Mammary epithelial cell (primary cell): ENCODE measurements at regions of chrX and their contacts with region 1.

Region 1: GRCh38 chrX:68828740-68829552 is at the start of gene EFNB1:
- DNase-seq: peak; percentile 90
- H3K4me3 ChIP-seq: peak within 1 kb of the TSS; percentile 66 to 74 (median 74)
- H3K27ac ChIP-seq: peak within 1 kb of the TSS; percentile 81
- H3K4me1 ChIP-seq: peaks cover 5% of the 10 kb centered on the region
- H3K27me3 ChIP-seq: no peaks in the 10 kb centered on the region
- CTCF ChIP-seq: no peak
- total RNA-seq, gene EFNB1: 143 to 167 TPM

Region 2: DNA sequence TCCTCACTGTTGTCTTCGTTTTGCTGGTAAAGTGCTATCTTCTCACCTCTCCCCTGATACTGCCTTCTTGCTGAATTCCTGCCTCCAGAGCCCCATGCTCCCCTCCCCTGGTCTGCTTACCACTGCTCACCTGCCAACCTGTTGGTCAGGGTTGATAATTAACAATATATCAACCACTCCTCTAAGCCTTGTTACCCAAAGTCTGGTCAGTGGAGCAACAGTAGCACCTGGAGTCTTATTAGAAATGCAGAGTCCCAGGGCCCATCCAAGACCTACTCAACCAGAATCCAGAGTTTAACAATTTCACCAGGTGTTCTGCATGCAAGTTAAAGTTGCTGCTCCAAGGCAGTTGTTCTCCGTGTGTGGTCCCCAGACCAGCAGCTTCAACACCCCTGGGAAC is 54.9 kb after region 1 on chrX:
- CTCF ChIA-PET with region 1: no interaction called
- dilution Hi-C with region 1: no loop called
- in situ Hi-C with region 1: no loop called
- intact Hi-C with region 1: no loop called
- DNase-seq: no peak
- H3K4me3 ChIP-seq: no peak overlapping the region
- H3K27ac ChIP-seq: no peak overlapping the region
- H3K4me1 ChIP-seq: peaks cover 9% of the 10 kb centered on the region
- H3K27me3 ChIP-seq: no peaks in the 10 kb centered on the region
- CTCF ChIP-seq: no peak

Region 3: DNA sequence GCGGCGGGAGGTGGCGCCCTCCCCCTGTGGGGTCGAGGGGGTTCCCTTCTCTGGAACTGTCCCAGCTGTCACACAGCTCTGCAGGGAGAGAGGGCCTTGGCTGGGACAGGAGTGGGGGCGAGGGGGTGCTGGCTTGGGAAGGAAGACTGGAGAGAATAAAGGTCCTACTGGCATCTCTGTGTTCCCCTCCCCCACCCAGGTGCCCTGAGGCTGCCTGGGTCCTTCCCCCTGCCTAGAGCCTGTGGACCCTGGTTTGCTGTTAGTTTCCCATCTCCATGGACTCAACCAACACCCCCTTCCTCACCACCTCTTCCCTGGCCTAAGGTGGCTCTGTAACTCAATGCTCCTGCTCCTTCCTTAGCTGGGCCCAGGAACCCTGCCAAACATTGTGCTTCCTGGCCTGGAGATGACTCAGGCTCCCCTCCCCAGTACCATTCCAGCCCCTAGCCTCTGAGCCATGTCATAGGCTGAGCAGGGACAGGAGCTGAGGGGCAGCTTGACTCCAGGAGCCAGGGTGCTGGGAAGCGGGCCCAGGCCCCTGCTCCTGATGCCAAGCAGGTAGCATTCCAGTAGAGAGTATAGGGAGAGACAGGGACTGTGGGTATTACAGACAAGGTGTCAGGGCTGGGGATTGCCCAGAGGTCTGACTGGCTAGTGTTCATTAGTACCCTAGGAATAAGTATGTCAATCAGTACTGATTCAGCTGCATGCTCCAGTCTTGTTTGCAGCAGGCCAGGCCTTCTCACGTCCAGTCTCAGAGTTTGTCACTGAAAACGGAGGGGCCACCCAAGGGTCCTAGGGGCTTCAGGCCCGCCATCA is 100.6 kb after region 1 on chrX:
- CTCF ChIA-PET with region 1: no interaction called
- dilution Hi-C with region 1: no loop called
- in situ Hi-C with region 1: loop called in 1 of 2 experiments (anchors 10 kb)
- intact Hi-C with region 1: loop called (anchors 2 kb)
- DNase-seq: peak; percentile 66
- H3K4me3 ChIP-seq: no peak overlapping the region
- H3K27ac ChIP-seq: no peak overlapping the region
- H3K4me1 ChIP-seq: peaks cover 16% of the 10 kb centered on the region
- H3K27me3 ChIP-seq: no peaks in the 10 kb centered on the region
- CTCF ChIP-seq: no peak

Region 4: DNA sequence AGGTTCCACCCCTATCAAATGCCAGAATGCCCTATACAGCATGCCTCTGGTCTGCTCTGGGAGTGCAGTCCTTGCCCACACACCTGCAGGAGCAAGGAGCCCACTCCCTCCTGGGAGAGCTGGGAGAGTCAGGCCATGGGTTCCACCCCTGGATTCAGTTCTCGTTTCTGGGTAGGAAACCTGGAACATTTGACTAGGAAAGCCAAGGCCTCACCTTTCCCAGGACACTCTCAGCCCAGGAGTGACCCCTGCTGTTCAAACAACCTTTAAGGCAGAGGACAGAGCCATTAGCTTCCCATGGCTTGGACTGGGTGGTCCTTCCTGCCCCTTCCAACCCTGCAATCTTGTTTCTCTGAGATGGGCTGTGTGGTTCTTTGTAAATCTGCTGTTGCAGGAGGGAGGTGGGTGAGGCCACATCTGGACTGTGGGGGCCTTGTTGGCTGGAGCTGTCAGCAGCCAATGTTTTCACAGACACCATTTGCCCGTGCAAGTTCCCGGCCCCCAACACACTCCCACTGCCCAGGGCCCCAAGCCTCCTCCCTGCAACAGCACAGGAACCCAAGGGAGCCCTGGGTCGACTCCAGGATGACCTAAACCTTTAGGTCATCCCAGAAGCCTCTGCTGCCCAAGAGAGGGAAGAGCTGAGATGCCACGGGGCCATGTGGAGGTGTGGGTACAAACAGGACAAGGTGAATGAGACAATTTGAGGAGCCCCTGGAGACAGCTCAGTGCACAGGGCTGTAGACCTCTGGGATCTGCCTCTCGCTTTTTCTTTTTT is 231.9 kb after region 1 on chrX:
- CTCF ChIA-PET with region 1: interaction called, 7 read pairs
- dilution Hi-C with region 1: no loop called
- in situ Hi-C with region 1: no loop called
- intact Hi-C with region 1: loop called (anchors 1 kb)
- DNase-seq: peak; percentile 36
- H3K4me3 ChIP-seq: no peak overlapping the region
- H3K27ac ChIP-seq: no peak overlapping the region
- H3K4me1 ChIP-seq: no peaks in the 10 kb centered on the region
- H3K27me3 ChIP-seq: no peaks in the 10 kb centered on the region
- CTCF ChIP-seq: peak in 1 of 2 donors; percentile 48

Region 5: GRCh38 chrX:69216911-69217310 is 388.0 kb after region 1 on chrX:
- CTCF ChIA-PET with region 1: interaction called, 12 read pairs
- dilution Hi-C with region 1: no loop called
- in situ Hi-C with region 1: loop called in 1 of 2 experiments (anchors 5 kb)
- intact Hi-C with region 1: loop called (anchors 1 kb)
- DNase-seq: no peak
- H3K4me3 ChIP-seq: no peak overlapping the region
- H3K27ac ChIP-seq: no peak overlapping the region
- H3K4me1 ChIP-seq: no peaks in the 10 kb centered on the region
- H3K27me3 ChIP-seq: no peaks in the 10 kb centered on the region
- CTCF ChIP-seq: no peak

Region 6: DNA sequence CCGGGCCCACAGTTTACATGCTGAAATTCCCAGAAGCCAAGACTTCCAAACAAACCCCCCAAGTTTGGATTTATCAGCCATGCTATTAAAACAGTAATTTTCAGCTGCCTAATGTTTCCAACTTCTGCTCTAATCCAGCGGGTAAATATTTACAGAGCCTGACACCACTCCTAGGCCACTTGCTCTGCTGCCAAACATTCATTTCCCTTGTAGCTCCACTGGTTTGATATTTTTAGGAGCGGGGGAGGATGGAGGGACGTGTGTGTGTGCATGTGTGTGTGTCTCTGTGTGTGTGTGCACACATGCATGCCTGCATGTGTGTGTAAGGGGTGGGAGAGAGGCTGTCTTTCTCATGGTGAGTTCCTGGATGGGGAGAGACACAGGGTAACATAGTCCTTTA is 452.0 kb after region 1 on chrX:
- CTCF ChIA-PET with region 1: no interaction called
- dilution Hi-C with region 1: no loop called
- in situ Hi-C with region 1: loop called (anchors 5 to 10 kb)
- intact Hi-C with region 1: loop called (anchors 1 kb)
- DNase-seq: no peak
- H3K4me3 ChIP-seq: no peak overlapping the region
- H3K27ac ChIP-seq: no peak overlapping the region
- H3K4me1 ChIP-seq: peaks cover 6% of the 10 kb centered on the region
- H3K27me3 ChIP-seq: no peaks in the 10 kb centered on the region
- CTCF ChIP-seq: no peak

Region 7: GRCh38 chrX:69387567-69388487 is 558.9 kb after region 1 on chrX:
- CTCF ChIA-PET with region 1: interaction called, 3 read pairs
- dilution Hi-C with region 1: no loop called
- in situ Hi-C with region 1: loop called in 1 of 2 experiments (anchors 25 kb)
- intact Hi-C with region 1: loop called (anchors 1 kb)
- DNase-seq: peak; percentile 8
- H3K4me3 ChIP-seq: no peak overlapping the region
- H3K27ac ChIP-seq: no peak overlapping the region
- H3K4me1 ChIP-seq: peaks cover 9% of the 10 kb centered on the region
- H3K27me3 ChIP-seq: no peaks in the 10 kb centered on the region
- CTCF ChIP-seq: peak; percentile 64 to 85